Psoas muscle (tissue), 8 donors: ENCODE measurements at regions of chr12 and their contacts with region 1.

Region 1: DNA sequence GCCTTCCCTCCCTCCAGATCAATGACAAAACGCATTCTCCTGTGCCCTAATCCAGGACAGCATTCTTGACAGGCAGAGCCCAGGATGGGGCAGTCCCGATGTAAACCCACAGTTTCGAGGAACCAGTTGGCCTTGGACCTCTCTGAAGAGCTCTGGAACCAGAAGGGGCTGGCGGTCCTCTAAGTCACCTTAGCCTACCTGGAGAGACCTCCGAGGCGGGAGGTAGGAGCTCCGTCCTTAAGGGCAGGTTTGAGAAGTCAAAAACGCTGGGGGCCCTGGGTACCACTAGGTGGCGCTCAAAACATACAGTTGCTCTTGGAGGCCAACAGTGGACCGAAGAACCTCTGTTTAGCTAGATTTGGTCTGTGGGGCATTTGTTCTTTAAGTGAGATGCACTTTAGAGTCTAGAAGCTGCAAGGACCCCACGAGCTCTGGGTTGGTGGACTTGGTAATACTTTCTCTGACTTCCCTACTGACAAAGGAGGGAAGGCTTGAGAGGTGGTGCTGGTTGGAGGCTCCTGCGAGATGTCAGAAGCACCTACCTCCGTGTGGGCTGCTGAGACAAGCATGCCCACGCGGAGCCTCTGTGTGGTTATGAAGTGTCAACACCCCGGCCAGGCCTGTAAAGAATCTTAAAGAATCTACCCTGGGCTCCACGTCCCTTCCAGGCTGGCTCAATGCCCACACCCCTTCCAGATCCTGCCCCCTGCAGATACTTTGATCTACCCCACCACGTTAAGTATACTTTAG is 74.8 kb upstream of the CHST11 start:
- DNase-seq: peak; percentile 69 to 79
- ATAC-seq: peak; percentile 69 to 87 (median 82)
- H3K4me3 ChIP-seq: no peak overlapping the region
- H3K27ac ChIP-seq: no peak overlapping the region
- H3K4me1 ChIP-seq: no peaks in the 10 kb centered on the region
- H3K27me3 ChIP-seq: no peaks in the 10 kb centered on the region
- CTCF ChIP-seq: peak; percentile 93

Region 2: GRCh38 chr12:104352106-104352713 is 29.7 kb before region 1 on chr12:
- intact Hi-C with region 1: no loop called
- DNase-seq: no peak
- ATAC-seq: peak in 1 of 4 donors; percentile 25
- H3K4me3 ChIP-seq: no peak overlapping the region
- H3K27ac ChIP-seq: no peak overlapping the region
- H3K4me1 ChIP-seq: peaks cover 13% of the 10 kb centered on the region
- H3K27me3 ChIP-seq: no peaks in the 10 kb centered on the region
- CTCF ChIP-seq: no peak

Region 3: GRCh38 chr12:104494793-104495158 is 112.9 kb after region 1 on chr12:
- intact Hi-C with region 1: no loop called
- DNase-seq: no peak
- ATAC-seq: no peak
- H3K4me3 ChIP-seq: no peak overlapping the region
- H3K27ac ChIP-seq: no peak overlapping the region
- H3K4me1 ChIP-seq: peaks cover 7% of the 10 kb centered on the region
- H3K27me3 ChIP-seq: no peaks in the 10 kb centered on the region
- CTCF ChIP-seq: no peak

Region 4: GRCh38 chr12:104877123-104877705 is 495.3 kb after region 1 on chr12:
- intact Hi-C with region 1: loop called (anchors 2 kb)
- DNase-seq: peak in 1 of 2 donors; percentile 24
- ATAC-seq: peak in 2 of 4 donors; percentile 69
- H3K4me3 ChIP-seq: no peak overlapping the region
- H3K27ac ChIP-seq: no peak overlapping the region
- H3K4me1 ChIP-seq: no peaks in the 10 kb centered on the region
- H3K27me3 ChIP-seq: no peaks in the 10 kb centered on the region
- CTCF ChIP-seq: peak; percentile 63

Region 5: GRCh38 chr12:105053116-105053572 is 671.2 kb after region 1 on chr12:
- intact Hi-C with region 1: loop called (anchors 1 to 5 kb)
- DNase-seq: peak; percentile 63 to 73
- ATAC-seq: peak in 3 of 4 donors; percentile 48 to 84 (median 72)
- H3K4me3 ChIP-seq: no peak overlapping the region
- H3K27ac ChIP-seq: no peak overlapping the region
- H3K4me1 ChIP-seq: no peaks in the 10 kb centered on the region
- H3K27me3 ChIP-seq: no peaks in the 10 kb centered on the region
- CTCF ChIP-seq: peak; percentile 95